HEK293 (cell line): ENCODE measurements at regions of chr16 and their contacts with region 1.

Region 1: DNA sequence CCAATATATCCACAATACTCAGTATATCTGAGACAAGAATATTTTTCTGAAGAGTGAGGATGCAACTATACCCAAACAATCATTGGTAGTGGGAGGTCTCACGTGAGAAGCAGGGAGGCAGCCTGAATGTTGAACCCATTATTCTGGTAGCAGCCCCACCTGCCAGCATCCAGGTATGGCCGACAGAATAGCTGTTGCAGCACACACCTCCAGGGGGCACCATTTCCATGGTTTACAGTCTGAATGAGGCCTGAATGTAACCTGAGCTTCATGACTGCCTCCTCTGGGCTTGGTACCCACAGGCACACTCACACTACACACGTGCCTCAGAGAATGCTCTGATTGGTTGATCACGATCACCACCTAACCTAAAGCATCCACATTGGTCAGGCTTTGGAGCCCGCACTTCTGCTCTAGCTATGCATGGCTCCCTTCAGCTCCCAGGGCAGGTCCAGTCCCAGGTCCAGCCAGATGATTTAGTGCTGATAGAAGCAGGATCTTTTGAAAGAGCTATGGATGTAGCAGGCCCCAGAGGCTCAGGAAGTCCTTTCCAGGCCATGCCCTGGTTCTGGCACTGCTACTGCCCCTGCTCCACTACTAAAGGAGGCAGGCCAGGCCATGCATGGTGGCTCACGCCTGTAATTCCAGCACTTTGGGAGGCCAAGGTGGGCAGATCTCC is 11.0 kb upstream of the CBFB start:
- H3K4me3 ChIP-seq: no peak overlapping the region
- H3K27ac ChIP-seq: no peak overlapping the region
- H3K4me1 ChIP-seq: no peaks in the 10 kb centered on the region; the same call in 1 of the 2 replicates
- CTCF ChIP-seq: peak; percentile 88

Region 2: DNA sequence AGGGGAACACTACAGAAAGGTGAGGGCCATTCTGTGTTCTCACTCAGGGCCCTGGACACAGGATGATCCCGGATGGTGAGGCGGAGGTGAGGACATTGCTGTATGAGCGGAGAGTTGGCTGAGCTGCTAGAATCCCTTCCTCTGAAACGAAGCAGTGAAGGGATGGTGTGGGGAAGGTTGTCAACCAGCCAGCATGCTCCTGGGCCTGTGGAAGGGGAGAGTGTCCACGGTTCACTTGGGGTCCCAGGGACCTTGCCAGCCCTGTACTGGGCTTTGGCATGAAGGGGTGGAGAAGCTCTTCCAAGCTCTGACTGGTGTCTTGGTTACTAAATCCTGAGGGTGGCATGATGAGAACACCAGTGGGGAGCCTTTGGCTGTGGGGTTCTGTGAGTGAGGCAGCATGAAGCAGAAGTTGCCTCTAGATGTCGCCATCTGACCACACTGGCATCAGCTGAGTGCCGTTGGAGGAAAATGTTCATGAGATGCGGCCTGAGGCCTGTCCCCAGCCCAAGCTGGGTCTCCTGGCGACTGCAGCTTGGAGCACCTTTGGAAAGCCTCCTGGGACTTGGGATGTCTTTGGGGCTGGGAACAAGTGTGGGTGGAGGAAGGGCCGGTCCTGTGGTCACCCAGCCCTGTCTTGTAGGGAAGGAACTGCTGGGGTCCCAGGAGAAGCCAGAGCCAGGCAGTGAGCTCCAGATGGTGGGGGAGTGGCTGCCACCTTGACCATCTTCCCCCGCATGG is 122.8 kb before region 1 on chr16:
- CTCF ChIA-PET with region 1: interaction called, 19 read pairs
- POLR2A ChIA-PET with region 1: interaction called, 7 read pairs
- H3K4me3 ChIP-seq: no peak overlapping the region
- H3K27ac ChIP-seq: no peak overlapping the region
- H3K4me1 ChIP-seq: peaks cover 6% of the 10 kb centered on the region; the same call in 1 of the 2 replicates
- CTCF ChIP-seq: peak; percentile 97

Region 3: GRCh38 chr16:66924527-66925321 is 93.2 kb before region 1 on chr16:
- CTCF ChIA-PET with region 1: no interaction called
- POLR2A ChIA-PET with region 1: no interaction called
- H3K4me3 ChIP-seq: peak overlapping the region; percentile 5; the same call in 1 of the 2 replicates
- H3K27ac ChIP-seq: no peak overlapping the region
- H3K4me1 ChIP-seq: no peaks in the 10 kb centered on the region; the same call in 1 of the 2 replicates
- CTCF ChIP-seq: no peak

Region 4: GRCh38 chr16:67006930-67007658 is 10.9 kb before region 1 on chr16:
- CTCF ChIA-PET with region 1: interaction called, 10 read pairs
- POLR2A ChIA-PET with region 1: no interaction called
- H3K4me3 ChIP-seq: no peak overlapping the region
- H3K27ac ChIP-seq: no peak overlapping the region
- H3K4me1 ChIP-seq: no peaks in the 10 kb centered on the region
- CTCF ChIP-seq: no peak

Region 5: DNA sequence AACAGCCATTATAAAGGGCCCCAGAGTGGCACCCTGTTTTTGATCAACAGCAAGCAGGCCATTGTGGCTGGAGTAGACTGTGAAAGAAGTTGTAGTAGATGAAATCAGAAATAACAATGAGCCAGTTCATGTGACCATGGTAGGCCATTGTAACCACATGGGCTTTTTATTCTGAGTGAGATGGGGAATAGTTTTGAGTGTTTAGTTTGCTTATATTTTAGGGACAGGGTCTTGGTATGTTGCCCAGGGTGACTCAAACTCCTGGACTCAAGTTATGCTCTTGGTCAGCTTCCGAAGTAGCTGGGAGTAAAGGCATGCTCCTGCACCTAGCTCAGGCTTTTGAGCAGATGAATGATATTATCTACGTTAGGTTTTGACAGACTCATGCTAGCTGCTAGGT is 23.0 kb after region 1 on chr16:
- CTCF ChIA-PET with region 1: interaction called, 10 read pairs
- POLR2A ChIA-PET with region 1: no interaction called
- H3K4me3 ChIP-seq: no peak overlapping the region
- H3K27ac ChIP-seq: no peak overlapping the region
- H3K4me1 ChIP-seq: peaks cover 9% of the 10 kb centered on the region; the same call in 1 of the 2 replicates
- CTCF ChIP-seq: no peak

Region 6: DNA sequence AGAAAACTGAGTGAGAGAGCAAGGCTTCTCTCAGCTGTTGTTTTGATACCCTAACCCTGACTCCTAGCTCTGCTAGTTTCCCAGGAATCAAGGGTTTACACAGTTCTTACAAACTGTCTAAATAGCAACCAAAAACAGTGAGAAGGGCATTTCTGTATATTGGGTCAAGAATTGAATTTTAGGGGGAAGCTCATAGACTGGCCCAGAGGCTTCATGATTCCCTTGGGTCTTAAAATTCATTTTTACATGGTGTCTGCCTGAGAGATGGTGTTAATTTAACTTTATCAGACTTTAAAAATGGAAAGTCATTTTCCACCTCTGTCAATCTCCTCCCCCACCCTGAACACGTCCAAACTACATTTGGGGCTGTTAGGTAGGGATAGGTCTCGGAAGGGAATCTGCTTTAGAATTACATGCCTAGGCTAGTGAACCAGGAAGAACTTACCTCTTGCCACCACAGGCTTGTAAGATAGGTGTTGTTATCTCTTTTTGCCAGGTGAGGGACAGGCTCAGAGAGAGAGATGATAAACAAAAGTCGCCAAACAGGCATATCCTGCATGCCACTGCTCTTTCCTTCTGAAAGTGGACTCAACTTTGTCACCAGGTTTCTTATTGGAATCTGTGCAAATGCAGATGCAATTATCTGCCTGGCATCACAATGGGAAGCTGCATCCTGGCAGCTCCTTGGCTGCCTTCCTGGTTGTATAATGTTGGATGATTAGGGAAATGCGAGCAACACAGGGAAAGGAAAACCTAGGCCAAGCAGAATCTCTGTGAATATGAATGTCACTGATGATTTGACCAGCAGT is 94.8 kb after region 1 on chr16:
- CTCF ChIA-PET with region 1: interaction called, 10 read pairs
- POLR2A ChIA-PET with region 1: interaction called, 3 read pairs
- H3K4me3 ChIP-seq: no peak overlapping the region
- H3K27ac ChIP-seq: no peak overlapping the region
- H3K4me1 ChIP-seq: peaks cover 3% of the 10 kb centered on the region; the same call in 1 of the 2 replicates
- CTCF ChIP-seq: no peak

Region 7: GRCh38 chr16:67183627-67184328 is 165.8 kb after region 1 on chr16 and contains the start of gene MATCAP1:
- CTCF ChIA-PET with region 1: interaction called, 30 read pairs
- POLR2A ChIA-PET with region 1: no interaction called
- H3K4me3 ChIP-seq: peak within 1 kb of the TSS; percentile 84
- H3K27ac ChIP-seq: peak within 1 kb of the TSS; percentile 88
- H3K4me1 ChIP-seq: peaks cover 9% of the 10 kb centered on the region
- CTCF ChIP-seq: 0 out of 2 replicates have a peak, but pooled peaks have one; percentile 38

Region 8: GRCh38 chr16:67296422-67296821 is 278.5 kb after region 1 on chr16:
- CTCF ChIA-PET with region 1: no interaction called
- POLR2A ChIA-PET with region 1: no interaction called
- H3K4me3 ChIP-seq: no peak overlapping the region
- H3K27ac ChIP-seq: no peak overlapping the region
- H3K4me1 ChIP-seq: no peaks in the 10 kb centered on the region
- CTCF ChIP-seq: no peak